Spleen (tissue), 13 donors: ENCODE measurements at regions of chr14 and their contacts with region 1.

Region 1: DNA sequence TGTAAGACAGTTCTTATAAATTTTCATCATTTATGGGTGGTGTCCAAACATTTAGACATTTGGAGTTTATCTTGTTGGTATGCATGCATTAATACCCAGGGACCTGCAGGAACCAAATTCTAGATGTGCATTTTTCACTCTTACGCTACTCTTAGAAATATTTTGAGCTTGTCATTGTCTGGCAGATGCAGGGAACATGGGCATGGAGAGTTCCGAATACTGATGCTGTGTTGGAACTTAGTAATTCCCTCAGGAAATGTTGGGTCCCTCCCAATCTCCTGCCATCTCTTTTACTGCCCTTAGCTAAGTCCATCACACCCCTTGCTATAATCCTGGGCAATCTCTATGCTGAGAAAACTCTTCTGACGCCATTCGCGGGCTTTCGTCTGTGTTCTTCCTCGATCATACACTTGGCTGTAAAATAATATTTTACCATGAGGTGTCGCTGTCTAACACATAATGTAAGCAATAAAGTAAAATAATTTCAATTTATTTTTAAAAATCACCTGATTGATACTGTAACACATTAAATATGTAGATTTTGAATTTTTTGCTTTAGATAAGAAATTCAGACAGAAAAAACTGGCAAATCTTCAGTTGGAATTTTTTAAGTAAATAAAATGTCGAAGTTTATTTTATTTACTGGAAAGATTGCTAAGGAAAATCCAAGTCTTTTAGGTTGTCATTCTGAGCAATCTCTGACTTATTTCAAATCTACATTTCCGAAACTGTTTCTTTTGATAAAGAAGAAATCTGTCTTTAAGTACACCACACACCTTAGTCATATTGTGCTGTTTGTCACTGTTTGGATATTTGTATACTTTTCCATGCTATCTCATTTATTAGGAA is 304.1 kb upstream of the SSTR1 start:
- DNase-seq: no peak
- H3K4me3 ChIP-seq: no peak overlapping the region
- H3K27ac ChIP-seq: no peak overlapping the region
- H3K4me1 ChIP-seq: no peaks in the 10 kb centered on the region
- H3K27me3 ChIP-seq: peaks cover 0 to 26% (median 0%) of the 10 kb centered on the region in 7 donors
- CTCF ChIP-seq: peak in 8 of 11 experiments; percentile 26 to 58 (median 42)
- POLR2A ChIP-seq: no peak

Region 2: DNA sequence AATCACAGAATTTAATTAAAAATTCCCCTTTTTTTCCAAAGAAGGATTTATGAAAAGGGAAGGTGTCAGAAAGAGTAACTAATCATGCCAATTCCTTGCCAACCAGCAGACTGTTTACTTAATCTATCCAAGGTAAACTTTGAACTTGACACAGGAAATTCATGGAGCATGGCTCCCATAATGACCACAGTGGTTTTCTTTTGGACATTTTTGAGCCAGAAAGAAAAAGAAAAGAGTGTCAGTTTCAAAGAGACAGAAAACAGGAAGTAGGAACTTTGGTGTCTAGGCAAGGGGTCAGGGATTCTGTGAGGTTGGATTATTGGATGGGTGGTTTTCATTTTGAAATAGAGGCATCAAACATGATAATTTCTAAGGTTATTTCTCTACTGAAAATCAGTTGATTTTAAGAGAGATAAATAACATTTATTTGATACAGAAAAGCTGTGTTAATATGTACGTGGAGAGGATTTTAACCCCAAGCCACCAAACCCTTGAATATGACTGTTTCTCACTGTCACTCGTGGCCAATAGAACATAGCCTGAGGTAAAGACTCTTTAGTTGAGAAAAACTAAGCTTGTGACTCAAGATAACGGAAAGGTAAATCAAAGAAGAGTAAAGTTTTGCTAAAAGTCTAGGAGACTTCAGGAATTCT is 112.1 kb before region 1 on chr14:
- intact Hi-C with region 1: no loop called
- DNase-seq: no peak
- H3K4me3 ChIP-seq: no peak overlapping the region
- H3K27ac ChIP-seq: no peak overlapping the region
- H3K4me1 ChIP-seq: no peaks in the 10 kb centered on the region
- H3K27me3 ChIP-seq: no peaks in the 10 kb centered on the region
- CTCF ChIP-seq: no peak
- POLR2A ChIP-seq: no peak

Region 3: DNA sequence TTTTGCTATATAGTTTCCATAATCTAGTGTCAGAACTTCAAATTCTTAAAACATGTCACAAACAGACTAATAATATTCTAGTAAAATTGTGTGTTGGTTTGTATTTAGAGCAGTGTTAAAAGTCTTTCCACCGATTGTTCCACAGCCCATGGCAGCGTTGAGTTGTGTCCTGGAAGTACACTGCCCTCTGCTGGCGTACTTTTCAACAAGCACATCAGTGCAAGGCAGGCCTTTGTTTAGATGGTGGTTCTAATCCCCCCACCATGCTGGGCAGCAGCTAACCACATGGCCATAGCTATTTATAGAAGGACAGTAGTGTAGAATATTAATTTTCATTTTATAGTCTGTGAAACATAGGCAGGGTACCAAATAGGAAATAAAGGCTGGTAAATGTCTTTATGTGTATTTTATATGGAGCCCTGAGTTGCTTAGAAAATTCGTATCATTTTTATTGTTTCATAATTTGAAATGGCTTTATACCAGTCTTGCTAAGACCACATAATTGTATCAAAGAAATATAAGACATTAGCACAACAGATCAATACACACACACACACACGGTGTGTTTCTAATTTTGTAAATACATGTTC is 964.1 kb after region 1 on chr14:
- intact Hi-C with region 1: loop called (anchors 5 kb)
- DNase-seq: no peak
- H3K4me3 ChIP-seq: no peak overlapping the region
- H3K27ac ChIP-seq: peak overlapping the region in 1 of 8 donors; percentile 11
- H3K4me1 ChIP-seq: peaks cover 0 to 15% (median 0%) of the 10 kb centered on the region in 6 donors
- H3K27me3 ChIP-seq: no peaks in the 10 kb centered on the region
- CTCF ChIP-seq: peak; percentile 7 to 85 (median 70)
- POLR2A ChIP-seq: no peak